BJ (cell line): ENCODE measurements at regions of chr17 and their contacts with region 1.

Region 1: DNA sequence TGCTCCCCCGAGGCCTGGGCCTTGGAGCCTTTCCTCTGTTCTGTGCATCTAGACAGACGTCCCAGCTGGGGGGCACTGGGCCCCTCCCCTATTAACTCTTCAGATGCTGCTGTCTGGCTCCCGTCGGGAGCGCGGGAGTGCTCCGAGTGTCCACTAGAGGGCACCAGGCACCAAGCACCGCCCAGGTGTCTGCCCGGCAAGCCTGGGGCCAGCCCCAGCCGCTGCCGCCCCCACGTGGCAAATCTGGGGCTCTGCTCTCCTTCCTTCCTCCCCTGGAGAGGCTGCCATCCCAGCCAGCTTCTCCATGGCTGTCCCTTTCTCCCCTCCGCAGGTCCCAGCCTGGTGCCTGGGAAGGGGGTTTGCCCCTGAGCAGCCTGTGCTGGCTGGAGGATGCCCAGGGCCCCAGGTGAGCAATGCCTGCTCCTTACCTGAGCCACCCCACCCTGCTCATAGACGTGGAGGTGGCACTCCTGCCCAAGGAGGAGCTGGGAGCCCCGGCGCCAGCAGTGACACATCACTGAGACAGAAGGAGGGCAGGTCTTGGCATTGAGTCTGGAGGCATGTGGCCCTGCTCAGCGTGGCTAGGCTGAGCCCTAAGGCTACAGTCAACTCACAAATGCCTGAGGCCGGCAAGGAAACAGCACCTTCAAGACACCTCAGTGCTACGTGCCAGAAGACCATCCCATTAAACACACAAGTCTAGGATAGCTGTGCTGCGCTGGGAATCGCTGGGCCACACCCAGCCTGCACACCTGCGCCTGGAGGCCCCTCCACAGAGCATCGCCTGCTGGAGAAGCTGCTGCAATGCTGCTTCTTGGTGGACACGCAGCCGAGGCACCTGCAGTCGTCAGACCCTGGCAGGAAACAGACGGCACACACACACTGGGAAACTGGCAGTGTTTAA is 19.7 kb downstream of the TMEM235 start:
- DNase-seq: peak; percentile 16
- H3K4me3 ChIP-seq: no peak overlapping the region
- H3K27me3 ChIP-seq: no peaks in the 10 kb centered on the region; the same call in 1 of the 2 replicates
- CTCF ChIP-seq: peak; percentile 100

Region 2: GRCh38 chr17:78046923-78047322 is 204.2 kb before region 1 on chr17:
- CTCF ChIA-PET with region 1: no interaction called
- POLR2A ChIA-PET with region 1: no interaction called
- DNase-seq: no peak
- H3K4me3 ChIP-seq: no peak overlapping the region
- H3K27me3 ChIP-seq: no peaks in the 10 kb centered on the region
- CTCF ChIP-seq: no peak

Region 3: DNA sequence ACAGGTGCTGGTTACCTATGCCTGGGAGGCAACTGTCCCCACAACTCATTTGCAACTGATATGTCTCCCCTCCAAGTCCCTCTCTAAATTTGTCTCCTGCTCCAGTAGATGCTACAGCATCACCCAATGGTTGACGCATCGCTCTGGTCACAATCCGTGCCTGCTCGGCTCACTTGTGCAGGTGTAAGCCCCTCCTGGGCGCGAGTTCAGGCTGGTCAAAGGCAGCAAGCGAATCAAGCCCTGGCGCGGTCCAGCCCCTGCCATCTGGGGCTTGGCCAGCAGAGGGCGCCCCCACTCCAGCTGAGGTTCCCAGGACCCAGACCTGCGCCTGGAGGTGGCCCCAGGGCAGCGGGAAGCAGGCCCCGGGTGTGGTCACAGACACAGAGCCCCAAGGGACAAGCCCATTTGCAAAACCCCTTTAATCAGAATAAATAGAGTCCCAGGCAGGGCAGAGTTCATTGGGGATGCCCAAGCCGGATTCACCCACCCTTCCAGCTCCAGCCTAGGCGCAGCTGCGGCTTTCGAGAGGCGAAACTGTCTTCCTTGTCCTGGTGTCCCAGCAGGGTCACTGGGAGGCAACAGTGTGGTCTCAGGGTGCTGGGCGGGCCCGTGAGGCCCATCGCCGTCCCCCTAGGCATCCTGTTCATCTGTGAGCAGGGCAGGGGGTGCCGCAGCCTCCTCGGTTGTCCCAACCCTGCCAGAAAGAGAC is 138.5 kb before region 1 on chr17:
- CTCF ChIA-PET with region 1: interaction called, 17 read pairs
- POLR2A ChIA-PET with region 1: no interaction called
- DNase-seq: no peak
- H3K4me3 ChIP-seq: no peak overlapping the region
- H3K27me3 ChIP-seq: peaks cover 2% of the 10 kb centered on the region; the same call in 1 of the 2 replicates
- CTCF ChIP-seq: peak; percentile 99

Region 4: GRCh38 chr17:78268951-78269905 is 18.1 kb after region 1 on chr17:
- CTCF ChIA-PET with region 1: interaction called, 15 read pairs
- POLR2A ChIA-PET with region 1: no interaction called
- DNase-seq: no peak
- H3K4me3 ChIP-seq: no peak overlapping the region
- H3K27me3 ChIP-seq: peaks cover 19% of the 10 kb centered on the region
- CTCF ChIP-seq: no peak

Region 5: DNA sequence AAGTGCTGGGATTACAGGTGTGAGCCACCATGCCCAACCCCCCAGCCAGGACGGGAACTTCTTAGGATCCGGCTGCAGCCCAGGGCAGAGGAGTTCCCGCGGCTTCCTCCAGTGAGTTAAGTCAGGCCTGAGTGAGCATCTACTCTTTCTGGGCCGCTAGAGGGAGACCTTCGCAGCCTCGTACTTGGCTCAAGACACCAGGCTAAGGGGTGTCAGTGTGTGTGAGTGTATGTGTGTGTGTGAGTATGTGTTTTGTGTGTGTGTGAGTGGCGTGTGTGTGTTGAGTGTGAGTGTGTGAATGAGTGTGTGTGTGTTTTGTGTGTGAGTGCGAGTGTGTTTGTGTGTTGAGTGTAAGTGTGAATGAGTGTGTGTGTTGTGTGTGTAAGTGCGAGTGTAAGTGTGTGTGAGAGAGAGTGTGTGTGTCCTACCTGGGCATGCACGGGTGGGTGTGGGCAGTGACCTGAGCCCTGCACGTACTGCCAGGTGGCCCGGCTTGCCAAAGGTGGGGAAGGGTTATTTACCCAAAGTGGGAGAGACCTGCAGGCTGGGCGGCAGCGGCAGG is 38.7 kb after region 1 on chr17:
- CTCF ChIA-PET with region 1: interaction called, 10 read pairs
- POLR2A ChIA-PET with region 1: no interaction called
- DNase-seq: peak; percentile 43
- H3K4me3 ChIP-seq: no peak overlapping the region
- H3K27me3 ChIP-seq: no peaks in the 10 kb centered on the region
- CTCF ChIP-seq: peak; percentile 79

Region 6: GRCh38 chr17:78324391-78325075 is 73.4 kb after region 1 on chr17:
- CTCF ChIA-PET with region 1: no interaction called
- POLR2A ChIA-PET with region 1: no interaction called
- DNase-seq: peak; percentile 77
- H3K4me3 ChIP-seq: no peak overlapping the region
- H3K27me3 ChIP-seq: no peaks in the 10 kb centered on the region
- CTCF ChIP-seq: no peak